CD8-positive, alpha-beta T cell (primary cell): ENCODE measurements at regions of chr10 and their contacts with region 1.

Region 1: DNA sequence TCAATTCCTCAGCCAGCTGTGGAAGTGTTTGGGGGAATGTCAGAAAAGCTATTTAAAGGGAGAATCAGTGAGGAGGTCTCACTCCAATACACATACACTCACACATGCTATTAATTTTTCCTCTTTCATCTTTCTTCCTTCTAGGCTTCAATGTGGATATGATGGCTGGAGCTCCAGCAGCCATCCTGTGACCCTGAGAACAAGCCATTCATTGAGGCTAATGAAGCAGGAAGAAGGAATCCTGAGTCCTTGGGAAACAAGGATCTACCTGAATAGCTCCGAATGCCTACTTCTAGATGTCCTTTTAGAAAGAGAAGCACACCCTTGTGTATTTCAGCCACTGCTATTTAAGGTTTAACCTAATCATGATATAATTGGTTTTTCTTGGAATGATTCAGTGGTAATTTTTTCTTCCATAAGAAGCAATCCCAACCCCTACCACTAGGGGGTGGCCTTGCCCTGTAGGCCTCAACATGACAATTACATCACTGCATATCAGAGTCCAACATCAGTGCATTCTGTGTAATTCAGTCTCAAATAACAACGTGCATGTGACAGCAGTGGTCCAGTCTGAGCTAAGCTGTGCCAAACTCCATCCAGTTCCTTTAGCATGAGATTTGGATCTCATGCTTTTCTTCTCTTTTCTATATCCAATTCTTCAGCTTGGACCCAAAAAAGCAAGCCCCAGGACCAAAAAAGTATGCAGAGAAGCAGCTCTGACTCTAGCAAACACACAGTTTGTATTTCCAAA is 85.3 kb upstream of the ANKRD1 start:
- DNase-seq: peak; percentile 37 to 81 (median 68)
- ATAC-seq: peak; percentile 91
- H3K4me3 ChIP-seq: no peak overlapping the region
- H3K4me3 Mint-ChIP-seq: peak overlapping the region; percentile 73
- H3K27ac ChIP-seq: peak overlapping the region in 1 of 2 experiments; percentile 11
- H3K27ac Mint-ChIP-seq: peak overlapping the region; percentile 73
- H3K4me1 ChIP-seq: peaks cover 20% of the 10 kb centered on the region
- H3K4me1 Mint-ChIP-seq: peaks cover 21% of the 10 kb centered on the region
- H3K27me3 ChIP-seq: no peaks in the 10 kb centered on the region
- H3K27me3 Mint-ChIP-seq: no peaks in the 10 kb centered on the region
- CTCF ChIP-seq: peak; percentile 94

Region 2: GRCh38 chr10:90885176-90885575 is 121.0 kb before region 1 on chr10:
- CTCF ChIA-PET with region 1: no interaction called
- POLR2A ChIA-PET with region 1: no interaction called
- intact Hi-C with region 1: loop called in 1 of 2 experiments (anchors 10 kb)
- DNase-seq: no peak
- ATAC-seq: no peak
- H3K4me3 ChIP-seq: no peak overlapping the region
- H3K4me3 Mint-ChIP-seq: no peak overlapping the region
- H3K27ac ChIP-seq: no peak overlapping the region
- H3K27ac Mint-ChIP-seq: no peak overlapping the region
- H3K4me1 ChIP-seq: no peaks in the 10 kb centered on the region
- H3K4me1 Mint-ChIP-seq: no peaks in the 10 kb centered on the region
- H3K27me3 ChIP-seq: no peaks in the 10 kb centered on the region
- H3K27me3 Mint-ChIP-seq: no peaks in the 10 kb centered on the region
- CTCF ChIP-seq: no peak

Region 3: GRCh38 chr10:91022924-91023699 is 16.9 kb after region 1 on chr10:
- CTCF ChIA-PET with region 1: interaction called, 16 read pairs
- POLR2A ChIA-PET with region 1: interaction called, 5 read pairs
- intact Hi-C with region 1: no loop called
- DNase-seq: no peak
- ATAC-seq: no peak
- H3K4me3 ChIP-seq: no peak overlapping the region
- H3K4me3 Mint-ChIP-seq: no peak overlapping the region
- H3K27ac ChIP-seq: no peak overlapping the region
- H3K27ac Mint-ChIP-seq: no peak overlapping the region
- H3K4me1 ChIP-seq: no peaks in the 10 kb centered on the region
- H3K4me1 Mint-ChIP-seq: no peaks in the 10 kb centered on the region
- H3K27me3 ChIP-seq: no peaks in the 10 kb centered on the region
- H3K27me3 Mint-ChIP-seq: no peaks in the 10 kb centered on the region
- CTCF ChIP-seq: no peak

Region 4: GRCh38 chr10:91088300-91089140 is 82.3 kb after region 1 on chr10:
- CTCF ChIA-PET with region 1: interaction called, 39 read pairs
- POLR2A ChIA-PET with region 1: no interaction called
- intact Hi-C with region 1: loop called (anchors 1 to 2 kb)
- DNase-seq: peak in 2 of 9 experiments; percentile 30 to 49
- ATAC-seq: peak; percentile 46
- H3K4me3 ChIP-seq: no peak overlapping the region
- H3K4me3 Mint-ChIP-seq: no peak overlapping the region
- H3K27ac ChIP-seq: no peak overlapping the region
- H3K27ac Mint-ChIP-seq: no peak overlapping the region
- H3K4me1 ChIP-seq: no peaks in the 10 kb centered on the region
- H3K4me1 Mint-ChIP-seq: peaks cover 2% of the 10 kb centered on the region
- H3K27me3 ChIP-seq: no peaks in the 10 kb centered on the region
- H3K27me3 Mint-ChIP-seq: no peaks in the 10 kb centered on the region
- CTCF ChIP-seq: no peak

Region 5: DNA sequence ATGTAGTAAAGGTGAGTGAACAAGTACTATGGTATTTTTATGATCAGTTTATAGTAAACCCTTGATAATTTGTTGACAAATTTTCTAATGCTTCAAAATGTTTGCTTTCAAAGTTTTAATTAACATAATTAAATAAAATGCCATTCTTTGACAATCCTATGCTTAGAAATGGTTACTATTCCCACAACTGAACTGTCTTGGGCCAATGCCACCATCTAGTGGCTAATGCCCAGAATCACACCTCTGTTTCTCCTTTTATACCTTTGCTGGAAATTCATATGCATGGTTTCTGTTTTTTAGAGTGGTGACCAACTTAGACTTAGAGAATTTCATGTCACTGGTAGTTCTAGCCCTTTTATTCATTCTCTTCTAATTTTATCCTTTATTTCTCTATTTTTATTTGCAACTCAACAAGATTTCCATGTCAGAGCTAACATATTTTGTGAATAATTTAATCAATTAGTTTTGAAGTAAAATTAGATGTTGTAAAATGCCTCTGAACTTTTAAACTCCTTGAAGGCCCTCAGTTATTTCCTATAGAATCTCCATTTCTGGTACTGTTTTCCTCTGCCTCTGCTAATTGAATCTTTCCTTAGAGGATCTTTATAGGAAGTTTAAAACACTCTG is 245.4 kb after region 1 on chr10:
- CTCF ChIA-PET with region 1: interaction called, 268 read pairs
- POLR2A ChIA-PET with region 1: interaction called, 10 read pairs
- intact Hi-C with region 1: loop called (anchors 1 kb)
- DNase-seq: peak; percentile 18 to 79 (median 51)
- ATAC-seq: peak; percentile 89
- H3K4me3 ChIP-seq: no peak overlapping the region
- H3K4me3 Mint-ChIP-seq: no peak overlapping the region
- H3K27ac ChIP-seq: no peak overlapping the region
- H3K27ac Mint-ChIP-seq: no peak overlapping the region
- H3K4me1 ChIP-seq: peaks cover 15% of the 10 kb centered on the region
- H3K4me1 Mint-ChIP-seq: peaks cover 9% of the 10 kb centered on the region
- H3K27me3 ChIP-seq: no peaks in the 10 kb centered on the region
- H3K27me3 Mint-ChIP-seq: no peaks in the 10 kb centered on the region
- CTCF ChIP-seq: peak; percentile 99

Region 6: GRCh38 chr10:91298224-91298871 is 292.2 kb after region 1 on chr10:
- CTCF ChIA-PET with region 1: interaction called, 22 read pairs
- POLR2A ChIA-PET with region 1: no interaction called
- intact Hi-C with region 1: no loop called
- DNase-seq: peak; percentile 47 to 88 (median 79)
- ATAC-seq: peak; percentile 97
- H3K4me3 ChIP-seq: peak overlapping the region; percentile 23 to 59
- H3K4me3 Mint-ChIP-seq: peak overlapping the region; percentile 73
- H3K27ac ChIP-seq: no peak overlapping the region
- H3K27ac Mint-ChIP-seq: no peak overlapping the region
- H3K4me1 ChIP-seq: peaks cover 4% of the 10 kb centered on the region
- H3K4me1 Mint-ChIP-seq: peaks cover 10% of the 10 kb centered on the region
- H3K27me3 ChIP-seq: no peaks in the 10 kb centered on the region
- H3K27me3 Mint-ChIP-seq: peaks cover 9% of the 10 kb centered on the region
- CTCF ChIP-seq: peak; percentile 92

Region 7: DNA sequence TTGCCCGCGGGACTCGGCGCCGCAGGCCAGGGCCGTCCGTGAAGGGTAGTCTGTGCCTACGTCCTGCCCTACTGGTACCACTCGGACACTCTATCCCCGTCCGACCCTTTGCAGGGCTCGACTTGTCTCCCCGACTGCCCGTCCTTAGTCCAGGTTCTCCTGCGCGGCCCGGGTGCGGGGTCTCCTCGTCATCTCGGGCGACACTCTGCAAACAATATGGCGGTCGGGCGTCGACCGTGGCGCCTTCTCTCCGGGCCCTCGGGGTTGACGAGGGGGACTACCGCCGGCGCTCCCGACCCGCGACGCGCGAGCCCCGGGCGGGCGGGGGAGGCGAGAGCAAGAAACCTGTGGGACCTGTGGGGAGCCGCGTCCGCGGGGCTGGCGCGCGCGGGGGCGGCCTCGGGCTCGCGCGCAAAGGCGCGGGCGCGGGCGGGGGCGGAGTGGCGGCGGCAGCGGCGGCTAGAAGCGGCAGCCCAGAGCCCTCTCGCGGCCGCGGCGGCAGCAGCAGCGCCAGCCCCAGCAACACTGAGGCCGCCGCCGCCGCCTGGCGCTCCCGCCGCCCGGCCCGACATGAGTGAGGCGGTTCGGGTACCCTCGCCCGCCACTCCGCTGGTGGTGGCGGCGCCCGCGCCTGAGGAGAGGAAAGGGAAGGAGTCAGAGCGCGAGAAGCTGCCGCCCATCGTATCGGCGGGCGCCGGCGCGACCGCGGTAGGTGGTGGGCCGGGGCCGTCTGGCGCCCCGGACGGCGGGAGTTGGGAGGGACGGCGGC is 403.9 kb after region 1 on chr10 and contains the start of gene HECTD2:
- CTCF ChIA-PET with region 1: interaction called, 3 read pairs
- POLR2A ChIA-PET with region 1: no interaction called
- intact Hi-C with region 1: loop called in 1 of 2 experiments (anchors 10 kb)
- DNase-seq: peak; percentile 65 to 92 (median 82)
- ATAC-seq: peak; percentile 86
- H3K4me3 ChIP-seq: peak within 1 kb of the TSS; percentile 91 to 97
- H3K4me3 Mint-ChIP-seq: peak within 1 kb of the TSS; percentile 86
- H3K27ac ChIP-seq: peak within 1 kb of the TSS; percentile 90 to 95
- H3K27ac Mint-ChIP-seq: peak within 1 kb of the TSS; percentile 90
- H3K4me1 ChIP-seq: peaks cover 12% of the 10 kb centered on the region
- H3K4me1 Mint-ChIP-seq: peaks cover 13% of the 10 kb centered on the region
- H3K27me3 ChIP-seq: no peaks in the 10 kb centered on the region
- H3K27me3 Mint-ChIP-seq: no peaks in the 10 kb centered on the region
- CTCF ChIP-seq: peak; percentile 41
- total RNA-seq, gene HECTD2: 0.69 to 1.5 TPM